Activated T-helper 1 cell treated with anti-CD3 and anti-CD28 coated beads, Interleukin-12 subunit alpha, Interleukin-12 subunit beta, Interleukin-2, Interleukin-4 antibody, amounts not matched to agents 30 ng/mL and 10 ng/mL and 1 ng/mL, durations not matched to agents 14 hours and 24 hours and 36 hours (primary cell): ENCODE measurements at regions of chr3 and their contacts with region 1.

Region 1: GRCh38 chr3:121995161-121996137 is 26.6 kb downstream of the ILDR1 start:
- DNase-seq: no peak
- H3K4me3 Mint-ChIP-seq: no peak overlapping the region
- H3K27ac Mint-ChIP-seq: no peak overlapping the region
- H3K4me1 Mint-ChIP-seq: peaks cover 45% of the 10 kb centered on the region
- H3K27me3 Mint-ChIP-seq: no peaks in the 10 kb centered on the region

Region 2: GRCh38 chr3:121914081-121914998 is 81.1 kb before region 1 on chr3:
- intact Hi-C with region 1: loop called (anchors 5 kb)
- DNase-seq: no peak
- H3K4me3 Mint-ChIP-seq: no peak overlapping the region
- H3K27ac Mint-ChIP-seq: no peak overlapping the region
- H3K4me1 Mint-ChIP-seq: peaks cover 13% of the 10 kb centered on the region
- H3K27me3 Mint-ChIP-seq: no peaks in the 10 kb centered on the region